ENCODE measurements at regions of chr17 and their contacts with region 1.

Region 1: DNA sequence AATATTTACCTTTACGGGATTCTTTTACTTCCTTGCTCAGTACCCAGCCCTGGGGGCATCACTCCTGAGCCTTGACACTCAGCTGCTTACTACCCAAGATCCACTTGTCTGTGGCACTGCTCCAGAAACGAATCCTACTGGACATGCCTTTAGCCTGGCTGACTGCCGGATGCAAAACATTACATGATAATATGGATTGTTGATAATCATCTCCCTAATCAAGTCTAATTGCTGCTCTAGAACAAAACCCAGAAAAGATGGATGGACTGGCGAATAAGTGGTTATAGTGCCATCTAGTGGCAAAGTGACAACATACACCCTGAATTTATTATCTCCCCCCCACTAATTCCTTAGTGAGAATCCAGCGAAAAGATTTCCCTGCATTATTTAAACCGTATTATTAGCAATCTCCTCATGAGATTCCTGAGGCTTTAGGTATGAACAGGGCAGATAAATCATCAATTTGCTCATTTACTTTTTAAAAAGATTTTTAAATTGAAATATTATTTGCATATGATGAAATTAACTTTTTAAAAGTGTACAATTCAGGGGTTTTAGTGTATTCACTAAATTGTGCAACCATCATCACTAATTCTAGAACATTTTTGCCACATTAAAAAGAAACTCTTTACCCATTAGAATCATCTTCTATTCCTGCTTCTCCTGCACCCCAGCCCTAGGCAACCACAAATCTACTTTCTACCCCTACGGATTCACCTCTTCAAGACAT is 61.6 kb downstream of the RGS9 start:
- DNase-seq: peak in 2 of 4 donors; percentile 58 to 60
- ATAC-seq: peak; percentile 84
- H3K4me3 ChIP-seq: no peak overlapping the region
- H3K27ac ChIP-seq: no peak overlapping the region
- H3K4me1 ChIP-seq: peaks cover 0 to 5% of the 10 kb centered on the region in 2 donors
- H3K27me3 ChIP-seq: no peaks in the 10 kb centered on the region
- CTCF ChIP-seq: peak; percentile 63 to 82

Region 2: GRCh38 chr17:64940055-64940454 is 258.8 kb before region 1 on chr17:
- intact Hi-C with region 1: loop called in 1 of 2 experiments (anchors 10 kb)
- DNase-seq: no peak
- ATAC-seq: no peak
- H3K4me3 ChIP-seq: no peak overlapping the region
- H3K27ac ChIP-seq: no peak overlapping the region
- H3K4me1 ChIP-seq: no peaks in the 10 kb centered on the region
- H3K27me3 ChIP-seq: no peaks in the 10 kb centered on the region
- CTCF ChIP-seq: no peak

Region 3: DNA sequence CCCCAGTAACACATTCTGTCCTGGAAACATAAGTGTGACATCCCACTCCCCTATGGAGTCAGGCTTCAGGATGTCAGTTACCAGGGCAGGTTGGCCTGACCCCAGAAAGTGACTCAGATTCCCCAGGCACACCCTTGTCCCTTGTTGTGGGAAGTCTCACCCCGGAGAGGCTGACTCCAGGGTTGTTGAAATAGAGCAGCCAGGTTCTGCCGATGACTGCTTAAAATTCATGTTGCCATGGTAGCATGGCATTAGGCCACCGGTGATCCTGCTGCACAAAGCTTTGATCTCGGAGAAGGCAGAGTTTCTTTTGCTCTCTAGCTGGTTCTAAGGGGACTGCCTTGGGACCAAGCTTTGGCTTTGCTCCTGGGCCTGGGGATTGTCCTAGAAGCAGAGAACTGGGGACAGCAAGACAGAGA is 45.0 kb after region 1 on chr17:
- intact Hi-C with region 1: no loop called
- DNase-seq: peak in 1 of 4 donors; percentile 41
- ATAC-seq: peak; percentile 64
- H3K4me3 ChIP-seq: no peak overlapping the region
- H3K27ac ChIP-seq: no peak overlapping the region
- H3K4me1 ChIP-seq: no peaks in the 10 kb centered on the region
- H3K27me3 ChIP-seq: no peaks in the 10 kb centered on the region
- CTCF ChIP-seq: no peak

Region 4: DNA sequence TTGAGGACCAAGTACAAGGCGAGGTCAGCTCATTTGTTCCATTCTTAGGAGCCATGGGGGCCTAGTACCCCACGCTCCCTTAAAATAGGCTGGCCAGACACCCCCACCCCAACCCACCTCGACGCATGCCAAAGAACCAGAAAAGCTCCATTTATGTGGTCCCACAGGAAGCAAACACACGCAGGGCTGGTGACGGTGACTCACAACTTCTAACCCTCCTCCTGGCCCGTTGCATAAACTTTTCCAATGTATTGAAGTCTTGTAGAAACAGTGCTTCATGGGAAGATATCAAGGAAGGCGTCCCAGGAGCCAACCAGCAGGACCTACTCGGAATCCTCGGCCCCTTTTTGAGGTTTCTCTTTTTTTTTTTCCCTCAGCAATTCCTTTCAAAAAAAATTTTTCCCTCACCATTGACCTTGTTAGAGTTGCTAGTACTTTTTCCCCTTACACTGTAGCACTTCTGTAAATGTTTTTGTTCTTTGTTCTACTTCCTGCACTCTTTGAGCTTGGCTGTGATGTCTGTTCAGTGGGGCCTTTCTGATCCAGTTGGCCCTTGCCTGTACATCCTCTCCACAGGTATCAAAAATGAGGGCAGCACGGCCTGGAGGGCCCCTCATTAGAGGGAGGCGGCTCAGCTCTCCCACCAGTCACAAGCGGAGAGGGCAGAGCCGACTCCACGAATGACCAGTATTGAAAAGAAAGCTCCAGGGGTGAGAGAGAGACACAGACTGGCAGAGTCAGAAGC is 146.6 kb after region 1 on chr17:
- intact Hi-C with region 1: no loop called
- DNase-seq: no peak
- ATAC-seq: no peak
- H3K4me3 ChIP-seq: no peak overlapping the region
- H3K27ac ChIP-seq: no peak overlapping the region
- H3K4me1 ChIP-seq: no peaks in the 10 kb centered on the region
- H3K27me3 ChIP-seq: no peaks in the 10 kb centered on the region
- CTCF ChIP-seq: no peak

Region 5: DNA sequence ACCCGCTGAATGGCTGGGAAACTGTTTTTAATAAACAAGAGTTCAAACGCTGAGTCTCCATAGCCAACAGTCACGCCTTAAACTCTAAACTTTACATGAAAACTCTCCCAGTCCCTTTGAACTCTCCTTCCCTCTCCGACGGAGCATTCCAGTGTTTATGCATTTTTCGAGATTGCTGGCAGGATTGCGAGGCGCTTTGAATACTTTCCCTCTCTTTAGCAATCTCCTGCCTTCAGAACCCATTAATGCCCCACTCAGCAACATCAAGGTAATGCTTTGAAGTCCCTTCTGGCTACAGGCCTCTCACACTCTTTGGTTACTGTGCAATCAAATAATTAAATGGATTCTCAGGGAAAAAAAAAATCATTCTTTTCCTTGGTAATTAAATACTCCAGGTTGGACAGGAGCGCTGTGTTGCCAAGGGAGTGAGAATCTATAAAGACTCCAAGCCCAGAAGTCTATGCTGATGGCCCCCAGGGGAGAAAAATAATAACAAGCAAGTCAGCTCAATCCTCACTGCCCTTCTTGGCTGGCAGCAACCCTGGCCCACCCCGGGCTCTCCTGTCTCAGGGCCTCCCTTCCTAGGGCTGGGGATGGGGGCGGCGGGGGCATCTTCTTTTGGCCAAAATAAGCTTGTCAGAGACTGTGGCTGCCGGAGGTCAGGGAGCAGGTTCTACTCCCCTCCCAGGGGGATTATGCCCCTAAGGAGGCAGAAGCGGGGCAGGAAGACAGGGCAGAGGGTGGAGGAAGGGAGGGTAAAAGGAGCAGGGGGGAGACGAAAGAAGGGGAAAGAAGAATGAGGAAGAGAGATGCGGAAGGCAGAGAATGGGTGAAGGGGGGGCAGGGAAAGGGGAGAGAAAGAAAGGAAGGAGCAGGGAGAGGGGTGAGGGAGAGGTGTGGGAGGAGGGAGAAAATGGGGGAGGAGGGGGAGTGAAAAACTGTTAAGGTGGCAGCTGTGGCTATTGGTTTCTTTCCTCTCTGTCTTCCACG is 317.4 kb after region 1 on chr17:
- intact Hi-C with region 1: no loop called
- DNase-seq: peak in 2 of 4 donors; percentile 79 to 89
- ATAC-seq: peak; percentile 85
- H3K4me3 ChIP-seq: no peak overlapping the region
- H3K27ac ChIP-seq: peak overlapping the region; percentile 69 to 76
- H3K4me1 ChIP-seq: peaks cover 0 to 22% of the 10 kb centered on the region in 2 donors
- H3K27me3 ChIP-seq: no peaks in the 10 kb centered on the region
- CTCF ChIP-seq: no peak

Region 6: DNA sequence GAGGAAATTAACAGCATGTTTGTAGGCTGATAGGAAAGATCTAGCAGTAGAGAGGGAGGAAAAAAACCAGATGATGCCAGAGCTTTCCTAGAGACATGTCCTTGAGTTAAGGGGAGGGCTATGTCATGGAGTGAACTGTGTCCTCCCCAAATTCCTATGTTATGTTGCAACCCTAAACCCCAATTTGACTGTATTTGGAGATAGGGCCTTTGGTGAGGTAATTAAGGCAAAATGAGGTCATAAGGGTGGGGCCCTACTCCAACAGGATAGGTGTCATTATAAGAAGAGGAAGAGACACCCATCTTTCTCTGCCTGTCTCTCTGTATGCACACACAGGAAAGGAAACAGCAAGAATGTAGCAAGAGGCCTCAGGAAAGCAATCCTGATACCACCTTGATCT is 557.9 kb after region 1 on chr17:
- intact Hi-C with region 1: no loop called
- DNase-seq: no peak
- ATAC-seq: no peak
- H3K4me3 ChIP-seq: no peak overlapping the region
- H3K27ac ChIP-seq: no peak overlapping the region
- H3K4me1 ChIP-seq: peaks cover 0 to 7% of the 10 kb centered on the region in 2 donors
- H3K27me3 ChIP-seq: no peaks in the 10 kb centered on the region
- CTCF ChIP-seq: no peak